PC-3 (cell line): ENCODE measurements at regions of chr10 and their contacts with region 1.

Region 1: GRCh38 chr10:77832238-77832637 is 94.3 kb downstream of the DLG5 start:
- DNase-seq: no peak
- ATAC-seq: peak; percentile 11; the same call in 1 of the 2 replicates
- H3K4me3 ChIP-seq: no peak overlapping the region
- H3K27ac ChIP-seq: no peak overlapping the region
- H3K4me1 ChIP-seq: peaks cover 13% of the 10 kb centered on the region
- H3K27me3 ChIP-seq: no peaks in the 10 kb centered on the region
- CTCF ChIP-seq: no peak

Region 2: DNA sequence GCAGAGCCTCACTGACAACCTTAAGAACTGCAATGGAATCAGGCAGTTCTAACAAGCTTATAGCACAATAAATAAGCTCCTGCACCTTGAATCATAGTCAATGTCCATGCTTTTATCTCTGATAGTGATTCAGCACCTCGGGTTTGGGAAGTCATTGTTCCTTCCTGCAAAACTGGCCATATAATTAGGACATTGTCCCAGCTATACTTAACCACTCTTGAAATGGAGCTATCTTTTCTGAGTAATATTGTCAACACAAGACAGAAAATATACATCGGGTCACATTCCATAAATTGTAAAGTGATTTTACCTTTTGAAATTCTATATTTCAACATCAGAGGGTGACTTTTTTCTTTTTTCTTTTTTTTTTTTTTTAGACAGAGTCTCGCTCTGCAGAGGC is 877.4 kb before region 1 on chr10:
- CTCF ChIA-PET with region 1: interaction called, 10 read pairs
- POLR2A ChIA-PET with region 1: no interaction called
- intact Hi-C with region 1: no loop called
- DNase-seq: peak; percentile 97
- ATAC-seq: peak; percentile 89
- H3K4me3 ChIP-seq: no peak overlapping the region
- H3K27ac ChIP-seq: peak overlapping the region; percentile 2; the same call in 1 of the 2 replicates
- H3K4me1 ChIP-seq: peaks cover 19% of the 10 kb centered on the region
- H3K27me3 ChIP-seq: no peaks in the 10 kb centered on the region
- CTCF ChIP-seq: no peak